HCT116 (cell line): ENCODE measurements at regions of chr17 and their contacts with region 1.

Region 1: DNA sequence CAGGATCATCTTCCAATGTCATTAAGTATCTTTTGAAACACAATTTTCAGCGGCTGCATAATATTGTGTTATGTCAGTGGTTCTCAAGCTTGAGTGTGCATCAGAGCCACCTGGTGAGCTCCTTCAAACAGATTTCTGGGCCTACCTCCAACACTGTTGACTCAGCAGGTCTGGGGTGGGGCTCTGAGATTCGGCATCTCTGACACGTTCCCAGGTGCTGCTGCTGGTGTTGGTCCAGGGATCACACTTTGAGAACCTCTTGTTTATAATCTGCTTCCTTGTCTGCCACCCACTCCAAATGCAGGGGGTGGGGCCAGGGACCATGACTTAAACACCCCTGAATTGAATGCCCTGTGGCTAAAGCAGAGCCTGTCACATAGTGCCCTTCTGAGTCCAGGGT is 73.8 kb upstream of the HNF1B start:
- DNase-seq: peak; percentile 57
- ATAC-seq: peak; percentile 87
- H3K4me3 ChIP-seq: no peak overlapping the region
- H3K27ac ChIP-seq: no peak overlapping the region
- H3K4me1 ChIP-seq: peaks cover 10 to 32% of the 10 kb centered on the region in 2 experiments; a peak in 3 of 4 replicates
- H3K27me3 ChIP-seq: no peaks in the 10 kb centered on the region
- CTCF ChIP-seq: no peak
- POLR2A ChIP-seq: no peak
- RAD21 ChIP-seq: no peak

Region 2: GRCh38 chr17:37527249-37527851 is 291.3 kb before region 1 on chr17:
- CTCF ChIA-PET with region 1: interaction called, 8 read pairs
- POLR2A ChIA-PET with region 1: no interaction called
- RAD21 ChIA-PET with region 1: interaction called in 1 of 2 experiments, 5 read pairs
- intact Hi-C with region 1: loop called (anchors 1 kb)
- DNase-seq: peak; percentile 38
- ATAC-seq: peak; percentile 96
- H3K4me3 ChIP-seq: no peak overlapping the region
- H3K27ac ChIP-seq: no peak overlapping the region
- H3K4me1 ChIP-seq: no peaks in the 10 kb centered on the region
- H3K27me3 ChIP-seq: no peaks in the 10 kb centered on the region
- CTCF ChIP-seq: peak; percentile 66 to 83 (median 82); a peak in 5 of 6 replicates
- POLR2A ChIP-seq: no peak
- RAD21 ChIP-seq: peak; percentile 82

Region 3: DNA sequence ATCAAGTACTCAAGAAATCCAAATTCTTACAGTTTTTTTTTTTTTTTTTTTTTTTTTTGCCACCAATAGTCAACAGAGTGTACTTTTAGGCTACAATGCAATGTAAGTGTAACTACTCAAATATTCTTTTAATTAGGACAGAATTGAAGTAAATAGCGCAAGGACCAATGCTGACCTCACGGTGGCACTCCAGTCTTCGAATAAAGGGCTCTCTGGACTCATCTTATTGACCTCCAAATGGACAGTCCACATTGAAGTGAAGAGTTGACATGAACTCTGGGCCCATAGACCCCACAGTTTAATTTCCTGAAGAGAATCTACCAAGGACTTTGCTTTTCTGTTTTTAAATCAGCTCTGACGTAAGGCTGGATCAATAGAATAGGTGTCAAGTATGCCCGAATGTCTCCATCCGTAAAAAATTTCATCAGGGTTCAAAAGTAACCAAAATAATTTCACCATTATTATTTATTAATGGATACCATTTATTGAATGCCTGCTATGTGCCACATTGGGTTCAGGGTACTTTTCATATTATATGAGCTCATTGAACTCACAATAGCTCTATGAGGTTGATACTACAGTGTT is 168.2 kb before region 1 on chr17:
- CTCF ChIA-PET with region 1: interaction called, 36 read pairs
- POLR2A ChIA-PET with region 1: no interaction called
- RAD21 ChIA-PET with region 1: interaction called, 4 to 16 read pairs
- intact Hi-C with region 1: loop called (anchors 1 kb)
- DNase-seq: peak; percentile 41
- ATAC-seq: peak; percentile 78
- H3K4me3 ChIP-seq: no peak overlapping the region
- H3K27ac ChIP-seq: no peak overlapping the region
- H3K4me1 ChIP-seq: no peaks in the 10 kb centered on the region
- H3K27me3 ChIP-seq: peaks cover 24% of the 10 kb centered on the region; the same call in 1 of the 2 replicates
- CTCF ChIP-seq: peak; percentile 49 to 80 (median 76)
- POLR2A ChIP-seq: no peak
- RAD21 ChIP-seq: peak; percentile 82

Region 4: DNA sequence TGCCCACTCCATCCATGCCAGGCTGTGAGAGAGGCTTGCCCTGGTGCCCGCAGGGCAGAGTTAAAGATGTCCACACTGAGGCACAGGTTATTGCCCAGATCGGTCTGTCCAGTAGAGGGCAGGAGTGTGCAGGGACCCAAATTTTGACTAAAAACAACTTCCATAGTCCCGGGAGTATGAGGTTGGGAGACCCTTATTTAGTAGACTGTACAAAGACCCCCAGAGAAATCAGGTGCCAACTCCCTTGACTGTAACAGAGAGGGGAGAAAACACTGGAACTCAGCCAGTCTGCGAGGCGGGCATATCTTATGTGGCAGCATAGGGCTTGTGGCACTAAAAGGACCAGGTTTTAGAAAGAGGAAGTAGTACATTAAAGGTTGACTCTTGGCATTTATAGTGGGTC is 117.2 kb before region 1 on chr17:
- CTCF ChIA-PET with region 1: interaction called, 8 read pairs
- POLR2A ChIA-PET with region 1: no interaction called
- RAD21 ChIA-PET with region 1: interaction called in 1 of 2 experiments, 3 read pairs
- intact Hi-C with region 1: loop called (anchors 5 kb)
- DNase-seq: peak; percentile 18
- ATAC-seq: peak; percentile 79
- H3K4me3 ChIP-seq: no peak overlapping the region
- H3K27ac ChIP-seq: no peak overlapping the region
- H3K4me1 ChIP-seq: peaks cover 9 to 40% of the 10 kb centered on the region in 2 experiments
- H3K27me3 ChIP-seq: no peaks in the 10 kb centered on the region
- CTCF ChIP-seq: peak; percentile 57 to 87 (median 81)
- POLR2A ChIP-seq: no peak
- RAD21 ChIP-seq: peak; percentile 63

Region 5: GRCh38 chr17:37802712-37803416 is 15.8 kb before region 1 on chr17:
- CTCF ChIA-PET with region 1: interaction called, 10 read pairs
- POLR2A ChIA-PET with region 1: no interaction called
- RAD21 ChIA-PET with region 1: no interaction called
- intact Hi-C with region 1: no loop called
- DNase-seq: no peak
- ATAC-seq: no peak
- H3K4me3 ChIP-seq: no peak overlapping the region
- H3K27ac ChIP-seq: no peak overlapping the region
- H3K4me1 ChIP-seq: no peaks in the 10 kb centered on the region
- H3K27me3 ChIP-seq: no peaks in the 10 kb centered on the region
- CTCF ChIP-seq: no peak
- POLR2A ChIP-seq: no peak
- RAD21 ChIP-seq: no peak